Heart left ventricle (tissue), 16 donors: ENCODE measurements at regions of chr10 and their contacts with region 1.

Region 1: GRCh38 chr10:61760943-61761824 is 98.5 kb downstream of the CABCOCO1 start:
- DNase-seq: no peak
- ATAC-seq: no peak
- H3K4me3 ChIP-seq: no peak overlapping the region
- H3K27ac ChIP-seq: no peak overlapping the region
- H3K4me1 ChIP-seq: no peaks in the 10 kb centered on the region
- H3K27me3 ChIP-seq: no peaks in the 10 kb centered on the region
- CTCF ChIP-seq: no peak
- POLR2A ChIP-seq: no peak

Region 2: GRCh38 chr10:61812052-61812721 is 51.0 kb after region 1 on chr10:
- intact Hi-C with region 1: no loop called
- DNase-seq: no peak
- ATAC-seq: no peak
- H3K4me3 ChIP-seq: no peak overlapping the region
- H3K27ac ChIP-seq: no peak overlapping the region
- H3K4me1 ChIP-seq: no peaks in the 10 kb centered on the region
- H3K27me3 ChIP-seq: no peaks in the 10 kb centered on the region
- CTCF ChIP-seq: no peak
- POLR2A ChIP-seq: no peak

Region 3: DNA sequence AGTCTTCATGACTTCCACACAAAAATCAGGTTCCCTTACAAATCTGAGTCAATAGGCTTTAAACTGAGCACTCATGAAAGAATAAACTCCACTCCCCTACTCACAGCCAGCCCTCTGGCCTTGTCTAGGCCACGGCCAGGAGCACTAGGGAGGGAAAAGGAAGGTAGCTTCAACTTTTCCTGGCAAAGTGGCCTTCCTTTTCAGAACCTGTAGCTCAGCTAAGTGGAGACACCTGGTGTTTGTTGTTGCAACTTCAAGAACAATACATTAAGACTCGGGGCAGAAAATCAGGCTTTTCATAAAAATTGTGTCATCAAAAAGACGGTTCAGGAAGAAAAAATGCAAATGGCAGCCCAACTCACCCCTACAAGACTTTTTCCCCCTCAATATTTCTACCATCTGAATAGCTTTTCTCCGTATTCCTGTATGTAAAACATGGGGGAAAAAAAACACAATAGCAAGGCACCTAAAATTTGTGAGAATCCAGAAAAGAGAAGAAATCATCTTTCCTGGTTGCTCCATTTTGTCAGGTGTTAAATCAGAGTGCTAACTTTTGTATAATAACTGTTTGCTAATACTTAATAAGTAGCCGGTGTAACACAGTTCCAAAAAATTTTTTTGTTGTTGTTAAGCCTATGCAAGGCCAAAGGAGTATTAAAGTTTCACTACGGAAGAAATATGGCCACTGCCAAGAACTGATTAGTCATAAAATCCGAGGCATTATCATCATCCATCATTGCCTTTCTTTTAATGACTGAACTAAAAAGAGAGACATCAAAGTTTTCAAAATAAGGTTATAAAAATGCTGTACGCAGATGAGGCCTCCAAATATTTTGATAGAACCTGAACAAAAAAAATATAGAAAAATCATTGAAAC is 74.1 kb after region 1 on chr10:
- intact Hi-C with region 1: loop called in 3 of 10 experiments (anchors 10 kb)
- DNase-seq: no peak
- ATAC-seq: peak in 2 of 4 donors; percentile 34 to 71
- H3K4me3 ChIP-seq: no peak overlapping the region
- H3K27ac ChIP-seq: peak overlapping the region in 8 of 12 donors; percentile 12 to 48 (median 25)
- H3K4me1 ChIP-seq: peaks cover 0 to 28% (median 8%) of the 10 kb centered on the region in 12 donors
- H3K27me3 ChIP-seq: no peaks in the 10 kb centered on the region
- CTCF ChIP-seq: peak in 8 of 12 donors; percentile 26 to 48 (median 34)
- POLR2A ChIP-seq: no peak

Region 4: DNA sequence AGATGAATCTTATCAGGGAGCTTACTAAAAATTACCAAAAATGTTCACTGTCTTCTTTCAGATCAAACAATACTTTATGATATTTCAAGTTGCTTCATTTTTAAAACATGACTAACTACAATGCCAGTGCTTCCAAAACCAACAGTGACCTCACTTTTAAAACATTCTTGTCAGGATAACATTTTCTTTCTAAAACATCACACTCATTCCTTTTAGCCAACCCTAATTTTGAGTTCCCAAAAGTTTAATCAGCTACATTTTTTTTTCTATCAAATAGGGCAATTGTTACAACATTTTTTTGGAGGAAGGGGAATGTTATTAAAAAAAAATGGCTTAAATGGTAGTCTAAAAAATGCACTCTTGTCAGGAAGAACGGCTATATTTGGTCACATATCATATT is 470.2 kb after region 1 on chr10:
- intact Hi-C with region 1: loop called in 1 of 10 experiments (anchors 10 kb)
- DNase-seq: no peak
- ATAC-seq: peak in 2 of 4 donors; percentile 47 to 74
- H3K4me3 ChIP-seq: no peak overlapping the region
- H3K27ac ChIP-seq: peak overlapping the region in 4 of 12 donors; percentile 19 to 49 (median 40)
- H3K4me1 ChIP-seq: peaks cover 0 to 14% (median 2%) of the 10 kb centered on the region in 12 donors
- H3K27me3 ChIP-seq: no peaks in the 10 kb centered on the region
- CTCF ChIP-seq: no peak
- POLR2A ChIP-seq: no peak